ENCODE measurements at regions of chr11 and their contacts with region 1.

Region 1: DNA sequence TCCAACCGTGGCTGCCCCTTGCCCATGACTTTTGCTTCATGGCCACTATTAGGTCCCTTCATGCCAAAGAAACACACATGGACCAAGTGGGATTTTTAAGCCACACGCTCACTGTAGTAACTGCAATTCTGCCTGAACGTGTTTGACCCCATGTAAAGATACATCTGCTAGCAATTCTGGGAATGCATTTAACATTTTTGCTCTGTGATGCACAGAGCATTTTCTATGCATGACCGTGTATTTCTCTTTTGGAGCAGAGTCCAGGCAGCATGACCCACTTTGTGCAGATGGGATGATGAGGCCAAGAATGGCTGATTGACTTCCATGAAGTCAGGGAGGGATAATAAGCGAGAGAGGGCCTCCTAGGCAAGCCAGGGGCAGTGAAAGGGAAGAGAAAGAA is 108.5 kb downstream of the TP53I11 start:
- DNase-seq: no peak
- H3K4me3 ChIP-seq: no peak overlapping the region
- H3K27ac ChIP-seq: no peak overlapping the region
- H3K4me1 ChIP-seq: no peaks in the 10 kb centered on the region
- CTCF ChIP-seq: no peak

Region 2: GRCh38 chr11:45453721-45454120 is 611.5 kb after region 1 on chr11:
- CTCF ChIA-PET with region 1: no interaction called
- POLR2A ChIA-PET with region 1: interaction called, 10 read pairs
- intact Hi-C with region 1: no loop called
- DNase-seq: no peak
- H3K4me3 ChIP-seq: no peak overlapping the region
- H3K27ac ChIP-seq: no peak overlapping the region
- H3K4me1 ChIP-seq: no peaks in the 10 kb centered on the region
- CTCF ChIP-seq: no peak